Activated CD4-positive, alpha-beta T cell treated with anti-CD3 and anti-CD28 coated beads, Interleukin-2, amount 10 ng/mL, durations not matched to agents 24 days and 14 days (primary cell): ENCODE measurements at regions of chrX and their contacts with region 1.

Region 1: DNA sequence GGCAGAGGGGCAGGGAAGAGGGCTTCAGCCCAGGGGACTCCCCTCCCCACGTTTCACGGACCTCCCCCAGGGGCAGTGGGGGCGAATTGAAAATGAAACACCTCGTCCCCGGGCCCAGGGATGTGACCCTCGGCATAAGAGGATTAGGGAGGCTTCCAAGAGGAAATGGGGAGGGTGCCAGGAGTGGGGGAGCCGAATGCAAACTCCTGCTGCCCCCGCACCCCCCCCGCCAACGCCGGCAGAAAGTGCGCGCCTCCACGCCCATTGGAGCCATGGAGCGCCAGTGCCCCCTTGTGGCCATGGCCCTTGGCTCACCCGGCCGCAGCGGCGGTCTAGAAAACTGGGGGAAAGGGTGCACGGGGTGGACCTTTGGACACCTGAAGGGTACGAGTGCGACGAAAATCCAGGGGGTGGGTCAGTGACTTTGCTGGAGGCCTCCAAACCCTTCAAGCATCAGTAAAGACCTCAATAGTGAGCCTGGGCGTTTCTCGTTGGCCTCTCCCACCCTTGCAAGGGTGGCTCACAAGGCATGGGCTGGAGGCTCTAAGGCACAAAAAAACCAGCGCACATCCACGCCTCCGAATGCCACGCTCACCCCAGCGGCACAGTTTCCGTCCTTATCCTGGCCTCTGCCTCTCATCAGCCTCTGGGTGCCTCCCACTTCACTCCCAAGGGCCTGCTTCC is 120.8 kb upstream of the PJA1 start:
- DNase-seq: peak; percentile 84
- H3K4me3 Mint-ChIP-seq: peak overlapping the region; percentile 17
- H3K27ac Mint-ChIP-seq: no peak overlapping the region
- H3K4me1 Mint-ChIP-seq: no peaks in the 10 kb centered on the region
- H3K27me3 Mint-ChIP-seq: no peaks in the 10 kb centered on the region

Region 2: GRCh38 chrX:68719904-68720614 is 566.0 kb before region 1 on chrX:
- intact Hi-C with region 1: loop called (anchors 10 kb)
- DNase-seq: no peak
- H3K4me3 Mint-ChIP-seq: no peak overlapping the region
- H3K27ac Mint-ChIP-seq: no peak overlapping the region
- H3K4me1 Mint-ChIP-seq: no peaks in the 10 kb centered on the region
- H3K27me3 Mint-ChIP-seq: no peaks in the 10 kb centered on the region

Region 3: DNA sequence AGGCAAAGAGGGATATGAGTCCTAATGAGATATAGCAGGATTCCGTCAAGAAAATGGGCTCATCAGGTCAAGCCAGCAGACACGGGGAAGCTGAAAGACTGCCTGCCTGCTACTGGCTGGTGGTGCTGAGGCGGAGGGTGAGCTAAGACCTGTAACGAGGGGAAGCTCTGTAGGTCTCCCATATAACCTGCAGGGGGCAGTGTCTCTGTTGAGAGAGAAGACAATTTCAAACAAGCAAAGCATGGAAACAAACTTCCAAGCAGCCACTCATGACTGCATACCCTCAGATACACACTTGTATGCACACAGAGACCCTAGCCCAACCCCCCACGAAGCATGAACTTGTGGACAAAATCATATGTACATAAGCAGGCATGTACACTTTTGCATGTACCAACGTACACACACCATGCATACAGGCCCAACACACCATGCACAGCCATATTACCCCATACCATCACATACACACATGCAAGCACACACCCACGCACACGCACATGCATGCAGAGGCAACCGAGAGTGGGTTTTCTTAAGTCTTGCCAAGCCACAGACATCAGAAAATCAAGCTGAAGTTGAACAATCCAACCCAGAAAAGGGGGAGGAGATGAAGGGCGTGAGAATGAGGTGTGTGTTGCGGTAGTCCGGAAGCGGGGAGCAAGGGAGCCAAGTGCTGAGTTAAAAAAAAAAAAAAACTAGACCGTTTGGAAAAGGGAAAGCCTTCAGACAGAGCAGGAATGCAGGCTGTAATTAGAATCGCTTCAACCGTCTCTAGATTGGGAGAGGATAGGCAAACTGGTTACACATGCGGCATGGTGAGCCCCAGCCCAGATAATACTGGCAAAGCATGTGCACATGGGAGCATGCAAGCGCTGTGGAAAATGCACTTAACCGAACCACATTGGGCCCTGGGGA is 191.8 kb before region 1 on chrX:
- intact Hi-C with region 1: loop called (anchors 10 kb)
- DNase-seq: peak; percentile 73
- H3K4me3 Mint-ChIP-seq: no peak overlapping the region
- H3K27ac Mint-ChIP-seq: no peak overlapping the region
- H3K4me1 Mint-ChIP-seq: no peaks in the 10 kb centered on the region
- H3K27me3 Mint-ChIP-seq: no peaks in the 10 kb centered on the region

Region 4: DNA sequence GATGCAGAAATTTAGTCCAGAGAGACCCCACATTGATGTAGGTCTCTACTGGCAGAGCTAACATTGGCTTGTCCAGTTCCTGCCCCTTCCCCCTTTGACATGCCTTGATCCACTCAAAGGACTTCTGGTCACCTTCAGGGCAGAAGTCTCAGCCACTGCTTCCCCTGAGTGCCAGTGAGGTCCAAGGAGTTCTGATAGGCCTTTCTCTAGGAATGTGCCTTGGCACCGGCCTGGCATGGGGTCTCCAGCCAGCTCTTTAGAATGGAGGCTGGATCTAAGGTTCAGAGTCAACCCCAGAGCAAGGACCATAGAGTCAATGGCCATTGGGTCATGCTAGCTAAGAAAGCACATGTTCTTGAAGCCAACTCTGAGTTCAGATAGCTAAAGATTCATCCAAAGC is 32.2 kb before region 1 on chrX:
- intact Hi-C with region 1: no loop called
- DNase-seq: no peak
- H3K4me3 Mint-ChIP-seq: no peak overlapping the region
- H3K27ac Mint-ChIP-seq: no peak overlapping the region
- H3K4me1 Mint-ChIP-seq: no peaks in the 10 kb centered on the region
- H3K27me3 Mint-ChIP-seq: no peaks in the 10 kb centered on the region

Region 5: DNA sequence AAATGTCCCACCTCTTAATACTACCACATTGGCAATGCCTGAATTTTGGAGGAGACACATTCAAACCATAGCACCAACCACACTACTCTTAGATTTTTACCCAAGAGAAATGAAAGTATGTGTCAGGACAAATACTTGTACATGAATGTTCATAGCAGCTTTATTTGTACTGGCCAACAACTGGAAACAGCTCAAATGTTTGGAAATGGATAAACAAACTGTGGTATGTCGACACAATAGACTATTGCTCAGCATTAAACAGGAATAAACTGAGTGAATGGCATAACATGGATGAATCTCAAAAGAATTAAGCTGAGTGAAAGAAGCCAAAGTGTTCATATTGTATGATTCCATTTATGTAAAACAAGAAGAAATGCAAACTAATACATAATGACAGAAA is 311.4 kb after region 1 on chrX:
- intact Hi-C with region 1: no loop called
- DNase-seq: no peak
- H3K4me3 Mint-ChIP-seq: no peak overlapping the region
- H3K27ac Mint-ChIP-seq: no peak overlapping the region
- H3K4me1 Mint-ChIP-seq: no peaks in the 10 kb centered on the region
- H3K27me3 Mint-ChIP-seq: peaks cover 6% of the 10 kb centered on the region

Region 6: GRCh38 chrX:69674891-69675290 is 388.9 kb after region 1 on chrX:
- intact Hi-C with region 1: no loop called
- DNase-seq: no peak
- H3K4me3 Mint-ChIP-seq: no peak overlapping the region
- H3K27ac Mint-ChIP-seq: no peak overlapping the region
- H3K4me1 Mint-ChIP-seq: no peaks in the 10 kb centered on the region
- H3K27me3 Mint-ChIP-seq: no peaks in the 10 kb centered on the region